H1 (cell line): ENCODE measurements at regions of chr18 and their contacts with region 1.

Region 1: DNA sequence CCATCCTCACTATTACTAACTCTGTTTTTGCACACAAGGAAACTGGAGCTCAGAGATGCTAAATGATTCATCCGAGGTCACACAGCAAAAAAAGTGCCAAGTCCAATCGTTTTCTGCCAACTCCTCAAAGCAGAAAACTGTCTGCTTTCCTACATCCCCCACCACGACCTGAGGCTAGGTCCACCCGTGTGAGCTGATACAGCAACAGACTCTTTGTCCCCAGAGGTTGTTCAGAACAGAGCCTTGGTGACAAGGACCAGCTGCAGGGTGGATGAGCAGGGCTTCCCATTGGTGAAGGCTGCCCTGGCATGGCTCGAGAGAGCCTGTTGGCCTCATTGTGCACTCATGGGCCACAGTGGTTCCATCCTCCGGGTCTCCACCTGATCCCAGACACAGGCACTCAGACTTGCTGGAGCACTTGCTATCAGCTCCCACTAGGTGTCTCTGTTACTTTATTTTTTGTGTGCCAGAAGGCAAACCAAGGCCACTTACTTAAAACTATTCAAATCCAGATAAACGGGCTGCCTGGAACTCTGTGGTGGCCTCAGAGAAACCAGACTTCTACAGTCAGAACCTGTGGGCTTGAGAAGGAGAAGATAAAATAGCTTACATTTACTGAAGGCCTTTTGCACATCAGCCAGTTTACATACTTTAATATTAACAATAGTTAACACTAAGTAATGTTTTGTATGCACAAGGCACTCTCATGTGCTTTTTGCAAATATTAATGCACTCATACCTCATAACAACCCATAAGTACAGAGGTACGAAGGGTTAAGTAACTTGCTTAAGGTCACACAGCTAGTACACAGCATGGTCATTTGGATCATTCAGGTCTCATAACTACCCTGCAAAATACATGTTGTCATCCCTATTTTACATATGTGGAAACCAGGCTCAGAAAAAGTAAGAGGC is 62.9 kb upstream of the CTIF start:
- DNase-seq: peak; percentile 41 to 54
- H3K4me3 ChIP-seq: no peak overlapping the region
- H3K27ac ChIP-seq: no peak overlapping the region
- H3K4me1 ChIP-seq: no peaks in the 10 kb centered on the region
- H3K27me3 ChIP-seq: no peaks in the 10 kb centered on the region
- CTCF ChIP-seq: peak; percentile 55 to 93 (median 84)
- EP300 ChIP-seq: no peak
- POLR2A ChIP-seq: no peak
- RAD21 ChIP-seq: peak; percentile 94 to 97

Region 2: GRCh38 chr18:48385596-48385995 is 90.3 kb before region 1 on chr18:
- CTCF ChIA-PET with region 1: no interaction called
- POLR2A ChIA-PET with region 1: no interaction called
- DNase-seq: no peak
- H3K4me3 ChIP-seq: no peak overlapping the region
- H3K27ac ChIP-seq: no peak overlapping the region
- H3K4me1 ChIP-seq: no peaks in the 10 kb centered on the region
- H3K27me3 ChIP-seq: no peaks in the 10 kb centered on the region
- CTCF ChIP-seq: no peak
- EP300 ChIP-seq: no peak
- POLR2A ChIP-seq: no peak
- RAD21 ChIP-seq: no peak

Region 3: GRCh38 chr18:48410095-48410920 is 65.6 kb before region 1 on chr18:
- CTCF ChIA-PET with region 1: no interaction called
- POLR2A ChIA-PET with region 1: no interaction called
- DNase-seq: peak; percentile 57 to 94
- H3K4me3 ChIP-seq: peak overlapping the region; percentile 56 to 78 (median 64)
- H3K27ac ChIP-seq: no peak overlapping the region
- H3K4me1 ChIP-seq: peaks cover 2 to 16% (median 10%) of the 10 kb centered on the region in 4 experiments
- H3K27me3 ChIP-seq: peaks cover 21 to 56% (median 47%) of the 10 kb centered on the region in 4 experiments
- CTCF ChIP-seq: peak in 1 of 3 experiments; percentile 17; a peak in 1 of 4 replicates
- EP300 ChIP-seq: no peak
- POLR2A ChIP-seq: no peak
- RAD21 ChIP-seq: peak in 1 of 2 experiments; percentile 19; a peak in 2 of 4 replicates

Region 4: GRCh38 chr18:48460929-48461583 is 14.8 kb before region 1 on chr18:
- CTCF ChIA-PET with region 1: interaction called, 18 read pairs
- POLR2A ChIA-PET with region 1: no interaction called
- DNase-seq: no peak
- H3K4me3 ChIP-seq: no peak overlapping the region
- H3K27ac ChIP-seq: no peak overlapping the region
- H3K4me1 ChIP-seq: no peaks in the 10 kb centered on the region
- H3K27me3 ChIP-seq: no peaks in the 10 kb centered on the region
- CTCF ChIP-seq: no peak
- EP300 ChIP-seq: no peak
- POLR2A ChIP-seq: no peak
- RAD21 ChIP-seq: no peak

Region 5: GRCh38 chr18:48525671-48526070 is 49.8 kb after region 1 on chr18:
- CTCF ChIA-PET with region 1: no interaction called
- POLR2A ChIA-PET with region 1: no interaction called
- DNase-seq: no peak
- H3K4me3 ChIP-seq: no peak overlapping the region
- H3K27ac ChIP-seq: no peak overlapping the region
- H3K4me1 ChIP-seq: peaks cover 0 to 2% (median 2%) of the 10 kb centered on the region in 4 experiments; a peak in 1 of 7 replicates
- H3K27me3 ChIP-seq: no peaks in the 10 kb centered on the region
- CTCF ChIP-seq: no peak
- EP300 ChIP-seq: no peak
- POLR2A ChIP-seq: no peak
- RAD21 ChIP-seq: no peak

Region 6: DNA sequence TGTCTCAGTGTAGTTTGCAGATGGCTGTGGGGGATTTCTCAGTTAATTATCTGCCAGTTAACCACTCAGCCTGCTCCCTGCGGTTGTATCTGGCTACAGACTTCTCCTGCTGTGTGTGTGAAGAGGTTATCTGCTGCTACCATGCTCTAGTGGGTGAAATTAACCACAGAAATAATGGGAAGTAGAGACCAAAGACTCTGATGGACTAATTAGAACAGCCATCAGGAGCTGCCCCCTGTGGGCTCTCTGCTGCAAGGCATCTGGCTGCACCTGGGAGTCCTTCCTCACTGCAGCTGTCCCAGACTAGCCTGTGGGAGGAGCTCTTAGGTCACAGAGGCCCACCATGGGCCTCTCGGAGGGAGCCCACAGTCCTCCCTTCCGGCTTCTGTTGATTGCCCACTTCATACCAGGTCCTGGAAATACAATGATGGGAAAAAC is 129.5 kb after region 1 on chr18:
- CTCF ChIA-PET with region 1: interaction called, 41 read pairs
- POLR2A ChIA-PET with region 1: no interaction called
- DNase-seq: peak; percentile 50 to 73
- H3K4me3 ChIP-seq: no peak overlapping the region
- H3K27ac ChIP-seq: no peak overlapping the region
- H3K4me1 ChIP-seq: peaks cover 0 to 7% (median 0%) of the 10 kb centered on the region in 4 experiments; a peak in 2 of 7 replicates
- H3K27me3 ChIP-seq: no peaks in the 10 kb centered on the region
- CTCF ChIP-seq: peak; percentile 73 to 97 (median 81)
- EP300 ChIP-seq: no peak
- POLR2A ChIP-seq: no peak
- RAD21 ChIP-seq: peak; percentile 74 to 83

Region 7: GRCh38 chr18:48639772-48640432 is 164.0 kb after region 1 on chr18:
- CTCF ChIA-PET with region 1: interaction called, 17 read pairs
- POLR2A ChIA-PET with region 1: no interaction called
- DNase-seq: no peak
- H3K4me3 ChIP-seq: no peak overlapping the region
- H3K27ac ChIP-seq: no peak overlapping the region
- H3K4me1 ChIP-seq: peaks cover 3 to 8% (median 6%) of the 10 kb centered on the region in 4 experiments; a peak in 4 of 7 replicates
- H3K27me3 ChIP-seq: no peaks in the 10 kb centered on the region; a peak in 1 of 7 replicates
- CTCF ChIP-seq: peak; percentile 55 to 60 (median 60)
- EP300 ChIP-seq: no peak
- POLR2A ChIP-seq: no peak
- RAD21 ChIP-seq: peak; percentile 60 to 71

Region 8: GRCh38 chr18:48675352-48675761 is 199.5 kb after region 1 on chr18:
- CTCF ChIA-PET with region 1: interaction called, 16 read pairs
- POLR2A ChIA-PET with region 1: no interaction called
- DNase-seq: peak; percentile 72 to 97
- H3K4me3 ChIP-seq: no peak overlapping the region
- H3K27ac ChIP-seq: no peak overlapping the region
- H3K4me1 ChIP-seq: peaks cover 0 to 3% (median under 1%) of the 10 kb centered on the region in 4 experiments; a peak in 2 of 7 replicates
- H3K27me3 ChIP-seq: no peaks in the 10 kb centered on the region
- CTCF ChIP-seq: peak; percentile 94 to 97 (median 96)
- EP300 ChIP-seq: no peak
- POLR2A ChIP-seq: no peak
- RAD21 ChIP-seq: peak; percentile 94 to 97